ENCODE measurements at regions of chr2 and their contacts with region 1.

Region 1: DNA sequence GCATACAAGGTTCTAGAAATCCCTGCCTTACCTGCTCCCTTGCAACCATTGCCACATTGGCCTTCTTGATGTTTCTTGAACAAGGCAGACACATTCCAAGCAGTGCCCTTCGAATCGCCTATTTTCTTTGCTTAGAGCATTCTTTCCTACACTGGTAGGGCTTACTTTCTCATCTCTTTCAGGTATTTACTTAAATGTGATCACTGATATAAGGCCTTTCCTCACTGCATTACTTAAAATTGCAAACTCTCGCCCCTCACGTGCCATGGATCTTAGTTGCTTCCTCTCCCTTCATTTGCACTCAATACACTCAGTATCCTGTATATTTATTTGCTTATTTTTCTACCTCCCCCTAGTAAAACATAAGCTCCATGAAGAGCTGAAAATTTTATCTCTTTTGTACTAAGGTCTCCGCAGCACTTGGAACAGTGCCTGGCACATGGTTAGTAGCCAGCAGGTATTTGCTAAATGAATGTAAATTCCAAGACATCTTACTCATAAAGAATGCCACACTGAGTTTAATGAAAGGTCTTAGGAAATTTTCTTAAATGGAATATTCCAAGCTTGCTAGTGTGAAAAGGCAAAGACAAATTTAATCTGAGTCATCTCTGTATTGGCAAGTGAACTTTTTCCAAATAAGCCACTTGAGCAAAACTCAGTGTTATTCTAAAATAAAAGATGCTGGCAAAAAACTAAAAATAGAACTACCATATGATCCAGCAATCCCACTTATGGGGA is 42.4 kb upstream of the FIGN start:
- DNase-seq: peak; percentile 66 to 94
- H3K4me3 ChIP-seq: no peak overlapping the region
- H3K27ac ChIP-seq: peak overlapping the region; percentile 68
- H3K4me1 ChIP-seq: peaks cover 63% of the 10 kb centered on the region
- H3K27me3 ChIP-seq: no peaks in the 10 kb centered on the region
- CTCF ChIP-seq: no peak

Region 2: GRCh38 chr2:163682692-163683091 is 95.5 kb before region 1 on chr2:
- CTCF ChIA-PET with region 1: no interaction called
- POLR2A ChIA-PET with region 1: no interaction called
- intact Hi-C with region 1: loop called (anchors 10 kb)
- DNase-seq: peak in 1 of 2 experiments; percentile 55
- H3K4me3 ChIP-seq: no peak overlapping the region
- H3K27ac ChIP-seq: no peak overlapping the region
- H3K4me1 ChIP-seq: peaks cover 10% of the 10 kb centered on the region; the same call in 1 of the 2 replicates
- H3K27me3 ChIP-seq: no peaks in the 10 kb centered on the region
- CTCF ChIP-seq: no peak

Region 3: GRCh38 chr2:163735685-163736432 is 42.4 kb before region 1 on chr2 and contains the start of gene FIGN:
- CTCF ChIA-PET with region 1: no interaction called
- POLR2A ChIA-PET with region 1: interaction called, 6 read pairs
- intact Hi-C with region 1: loop called (anchors 2 kb)
- DNase-seq: peak; percentile 57 to 61
- H3K4me3 ChIP-seq: peak within 1 kb of the TSS; percentile 91
- H3K27ac ChIP-seq: peak within 1 kb of the TSS; percentile 57
- H3K4me1 ChIP-seq: no peaks in the 10 kb centered on the region
- H3K27me3 ChIP-seq: no peaks in the 10 kb centered on the region
- CTCF ChIP-seq: no peak
- total RNA-seq, gene FIGN: 3.1 and 7.4 TPM in 2 replicates

Region 4: GRCh38 chr2:163859951-163860350 is 81.7 kb after region 1 on chr2:
- CTCF ChIA-PET with region 1: no interaction called
- POLR2A ChIA-PET with region 1: no interaction called
- intact Hi-C with region 1: loop called (anchors 5 kb)
- DNase-seq: no peak
- H3K4me3 ChIP-seq: no peak overlapping the region
- H3K27ac ChIP-seq: no peak overlapping the region
- H3K4me1 ChIP-seq: no peaks in the 10 kb centered on the region
- H3K27me3 ChIP-seq: no peaks in the 10 kb centered on the region
- CTCF ChIP-seq: no peak

Region 5: DNA sequence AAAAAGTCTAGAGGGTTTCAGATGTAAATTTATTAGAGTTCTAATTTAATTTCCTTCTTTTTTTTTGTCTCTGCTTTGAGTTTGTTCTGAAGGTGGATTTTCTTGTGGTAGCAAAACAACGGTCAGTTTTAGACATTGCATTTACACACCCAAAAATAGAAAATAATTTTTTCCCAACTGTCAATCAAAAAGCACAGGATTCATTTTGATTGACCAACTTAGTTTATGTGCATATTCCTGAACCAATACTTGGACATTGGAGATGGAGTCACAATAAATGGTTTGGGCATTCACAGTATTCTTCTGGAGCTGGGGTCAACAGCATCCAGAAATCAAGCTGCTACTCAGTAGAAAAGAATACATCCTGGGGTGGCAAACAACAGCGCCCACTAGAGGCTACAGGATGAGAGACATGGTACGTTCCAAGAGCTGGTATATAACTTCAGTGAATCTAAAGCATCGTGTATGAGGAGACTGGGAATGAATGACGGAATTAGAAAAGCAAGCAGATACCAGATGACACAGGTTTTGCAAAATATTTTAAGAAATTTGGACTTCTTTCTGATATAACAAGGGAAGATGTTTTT is 100.4 kb after region 1 on chr2:
- CTCF ChIA-PET with region 1: no interaction called
- POLR2A ChIA-PET with region 1: no interaction called
- intact Hi-C with region 1: loop called (anchors 2 kb)
- DNase-seq: peak in 1 of 2 experiments; percentile 1
- H3K4me3 ChIP-seq: no peak overlapping the region
- H3K27ac ChIP-seq: no peak overlapping the region
- H3K4me1 ChIP-seq: no peaks in the 10 kb centered on the region
- H3K27me3 ChIP-seq: no peaks in the 10 kb centered on the region
- CTCF ChIP-seq: peak; percentile 47; the same call in 1 of the 2 replicates

Region 6: GRCh38 chr2:164073101-164073820 is 295.0 kb after region 1 on chr2:
- CTCF ChIA-PET with region 1: no interaction called
- POLR2A ChIA-PET with region 1: interaction called, 12 read pairs
- intact Hi-C with region 1: no loop called
- DNase-seq: no peak
- H3K4me3 ChIP-seq: no peak overlapping the region
- H3K27ac ChIP-seq: no peak overlapping the region
- H3K4me1 ChIP-seq: no peaks in the 10 kb centered on the region
- H3K27me3 ChIP-seq: no peaks in the 10 kb centered on the region
- CTCF ChIP-seq: no peak